Endothelial cell of umbilical vein (primary cell): ENCODE measurements at regions of chr2 and their contacts with region 1.

Region 1: GRCh38 chr2:158998551-158999248 is 30.3 kb downstream of the TANC1 start:
- DNase-seq: peak; percentile 86
- H3K4me3 ChIP-seq: peak overlapping the region in 1 of 3 experiments; percentile 42
- H3K27ac ChIP-seq: peak overlapping the region; percentile 87
- H3K4me1 ChIP-seq: peaks cover 41% of the 10 kb centered on the region
- H3K27me3 ChIP-seq: no peaks in the 10 kb centered on the region
- CTCF ChIP-seq: no peak
- POLR2A ChIP-seq: peak; percentile 32

Region 2: GRCh38 chr2:158745044-158745865 is 253.4 kb before region 1 on chr2:
- CTCF ChIA-PET with region 1: no interaction called
- POLR2A ChIA-PET with region 1: no interaction called
- dilution Hi-C with region 1: no loop called
- intact Hi-C with region 1: no loop called
- DNase-seq: peak; percentile 80
- H3K4me3 ChIP-seq: no peak overlapping the region
- H3K27ac ChIP-seq: no peak overlapping the region
- H3K4me1 ChIP-seq: peaks cover 3% of the 10 kb centered on the region
- H3K27me3 ChIP-seq: peaks cover 23 to 28% of the 10 kb centered on the region in 2 experiments
- CTCF ChIP-seq: peak; percentile 46 to 53
- POLR2A ChIP-seq: no peak

Region 3: DNA sequence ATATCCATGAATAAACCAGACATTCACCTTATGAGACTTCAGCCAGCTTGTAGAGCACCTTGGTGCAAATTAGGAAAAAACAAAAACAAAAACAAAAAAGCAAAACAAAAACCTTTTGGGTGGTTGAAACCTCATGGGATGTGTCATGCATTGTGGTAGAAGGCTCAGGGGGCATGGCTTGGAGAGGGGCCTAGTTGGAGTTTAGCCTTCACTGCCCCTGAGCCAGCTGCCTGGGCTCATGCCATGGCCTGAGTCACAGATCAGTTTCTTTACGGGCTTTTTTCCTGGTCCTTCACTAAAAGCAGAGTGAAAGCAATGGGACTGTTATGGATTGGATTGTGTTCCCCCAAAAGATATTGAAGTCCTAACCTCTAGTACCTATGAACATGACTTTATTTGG is 225.6 kb before region 1 on chr2:
- CTCF ChIA-PET with region 1: no interaction called
- POLR2A ChIA-PET with region 1: no interaction called
- dilution Hi-C with region 1: no loop called
- intact Hi-C with region 1: no loop called
- DNase-seq: no peak
- H3K4me3 ChIP-seq: no peak overlapping the region
- H3K27ac ChIP-seq: no peak overlapping the region
- H3K4me1 ChIP-seq: no peaks in the 10 kb centered on the region
- H3K27me3 ChIP-seq: peaks cover 4 to 8% of the 10 kb centered on the region in 2 experiments
- CTCF ChIP-seq: no peak
- POLR2A ChIP-seq: no peak

Region 4: GRCh38 chr2:158936978-158937377 is 61.7 kb before region 1 on chr2:
- CTCF ChIA-PET with region 1: interaction called, 4 read pairs
- POLR2A ChIA-PET with region 1: no interaction called
- dilution Hi-C with region 1: no loop called
- intact Hi-C with region 1: loop called (anchors 1 kb)
- DNase-seq: peak; percentile 99
- H3K4me3 ChIP-seq: no peak overlapping the region
- H3K27ac ChIP-seq: peak overlapping the region; percentile 87
- H3K4me1 ChIP-seq: peaks cover 18% of the 10 kb centered on the region
- H3K27me3 ChIP-seq: no peaks in the 10 kb centered on the region
- CTCF ChIP-seq: no peak
- POLR2A ChIP-seq: no peak

Region 5: DNA sequence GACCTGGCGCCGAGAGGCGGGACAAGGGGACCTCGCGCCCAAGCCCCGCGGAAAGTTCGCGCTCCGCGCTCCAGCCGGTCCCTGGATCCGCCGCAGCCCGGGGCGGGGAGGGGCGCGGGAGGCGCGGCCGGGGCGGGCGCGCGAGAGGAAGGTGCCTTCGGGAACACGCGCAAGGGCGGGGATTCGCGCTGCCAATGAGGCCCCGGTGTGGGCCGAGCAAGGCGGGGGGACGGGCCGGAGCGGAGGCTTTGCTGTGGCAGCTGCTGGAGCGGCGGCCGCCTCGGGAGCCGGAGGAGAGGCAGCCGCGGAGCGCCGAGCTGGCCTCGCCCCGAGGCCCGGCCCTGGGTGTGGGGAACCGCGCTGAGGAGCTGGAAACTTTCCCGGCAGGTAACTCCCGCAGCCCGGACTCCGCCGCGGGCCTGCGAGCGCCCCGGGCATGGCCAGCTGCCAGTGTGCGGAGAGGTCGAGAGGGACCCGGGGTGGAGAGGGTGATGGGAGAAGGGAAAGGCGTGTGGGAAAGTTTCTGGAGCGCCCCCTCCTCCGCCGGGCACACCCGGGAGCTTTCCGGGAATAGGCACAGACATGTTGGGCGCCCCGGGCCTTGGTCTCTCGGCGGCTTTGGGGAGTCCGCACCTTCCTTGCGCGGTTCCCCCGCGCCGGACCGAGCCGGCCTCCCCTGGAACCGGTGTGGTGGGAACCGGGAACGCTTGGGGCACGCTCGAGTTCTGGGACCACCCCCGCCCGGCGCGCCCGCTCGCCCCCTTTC is 30.1 kb before region 1 on chr2 and contains the start of gene TANC1:
- CTCF ChIA-PET with region 1: interaction called, 8 read pairs
- POLR2A ChIA-PET with region 1: no interaction called
- dilution Hi-C with region 1: no loop called
- intact Hi-C with region 1: loop called (anchors 1 kb)
- DNase-seq: peak; percentile 90
- H3K4me3 ChIP-seq: peak within 1 kb of the TSS; percentile 80 to 89 (median 89)
- H3K27ac ChIP-seq: peak within 1 kb of the TSS; percentile 75
- H3K4me1 ChIP-seq: peaks cover 36% of the 10 kb centered on the region
- H3K27me3 ChIP-seq: no peaks in the 10 kb centered on the region
- CTCF ChIP-seq: no peak
- POLR2A ChIP-seq: peak; percentile 96
- total RNA-seq, gene TANC1: 86.3 and 99.4 TPM in 2 replicates

Region 6: GRCh38 chr2:159010340-159010739 is 11.6 kb after region 1 on chr2:
- CTCF ChIA-PET with region 1: interaction called, 20 read pairs
- POLR2A ChIA-PET with region 1: no interaction called
- dilution Hi-C with region 1: no loop called
- intact Hi-C with region 1: no loop called
- DNase-seq: peak; percentile 52
- H3K4me3 ChIP-seq: no peak overlapping the region
- H3K27ac ChIP-seq: no peak overlapping the region
- H3K4me1 ChIP-seq: peaks cover 9% of the 10 kb centered on the region
- H3K27me3 ChIP-seq: no peaks in the 10 kb centered on the region
- CTCF ChIP-seq: no peak
- POLR2A ChIP-seq: no peak

Region 7: DNA sequence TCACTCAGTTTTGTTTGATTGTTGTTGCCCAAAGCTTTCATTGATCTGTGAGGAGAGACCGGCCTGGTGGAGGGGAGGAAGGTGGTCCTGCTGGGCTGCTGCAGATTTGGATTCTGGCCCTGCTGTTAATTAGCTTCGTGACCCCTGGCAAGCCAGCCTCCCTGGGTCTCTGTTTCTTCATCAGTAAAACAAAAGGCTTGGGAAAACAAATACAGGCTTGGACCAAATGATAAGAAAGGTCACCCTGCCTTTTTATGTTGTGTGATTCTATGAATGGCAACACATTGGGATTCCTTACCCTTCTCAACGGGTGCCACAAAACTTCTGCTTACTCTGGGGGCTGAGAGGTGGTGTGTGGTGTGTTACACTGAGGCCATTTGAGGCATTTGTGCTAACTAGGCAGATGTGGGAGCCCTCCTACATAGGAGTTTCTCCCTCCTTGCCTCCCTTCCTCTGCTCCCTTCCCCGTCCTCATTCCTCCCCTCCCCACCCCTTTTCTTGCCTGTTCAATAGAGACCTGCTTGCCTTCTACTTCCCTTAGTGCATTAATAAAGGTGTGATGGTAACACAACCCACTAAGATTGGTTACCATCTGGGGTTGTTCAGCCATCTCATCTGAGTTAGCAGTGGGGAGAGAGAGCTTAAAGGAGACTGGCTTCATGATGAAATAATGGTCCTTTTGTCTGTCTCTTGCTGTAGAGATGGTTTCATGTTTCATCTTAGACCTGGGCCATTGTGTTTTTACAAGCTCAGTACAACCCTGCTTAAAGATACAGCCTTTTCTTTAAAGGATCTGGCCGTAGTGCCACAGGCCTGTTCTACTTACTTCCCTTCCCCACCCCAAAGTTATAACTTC is 66.0 kb after region 1 on chr2:
- CTCF ChIA-PET with region 1: no interaction called
- POLR2A ChIA-PET with region 1: no interaction called
- dilution Hi-C with region 1: no loop called
- intact Hi-C with region 1: loop called (anchors 2 kb)
- DNase-seq: peak; percentile 94
- H3K4me3 ChIP-seq: no peak overlapping the region
- H3K27ac ChIP-seq: peak overlapping the region; percentile 54
- H3K4me1 ChIP-seq: peaks cover 42% of the 10 kb centered on the region
- H3K27me3 ChIP-seq: no peaks in the 10 kb centered on the region
- CTCF ChIP-seq: no peak
- POLR2A ChIP-seq: peak; percentile 26

Region 8: DNA sequence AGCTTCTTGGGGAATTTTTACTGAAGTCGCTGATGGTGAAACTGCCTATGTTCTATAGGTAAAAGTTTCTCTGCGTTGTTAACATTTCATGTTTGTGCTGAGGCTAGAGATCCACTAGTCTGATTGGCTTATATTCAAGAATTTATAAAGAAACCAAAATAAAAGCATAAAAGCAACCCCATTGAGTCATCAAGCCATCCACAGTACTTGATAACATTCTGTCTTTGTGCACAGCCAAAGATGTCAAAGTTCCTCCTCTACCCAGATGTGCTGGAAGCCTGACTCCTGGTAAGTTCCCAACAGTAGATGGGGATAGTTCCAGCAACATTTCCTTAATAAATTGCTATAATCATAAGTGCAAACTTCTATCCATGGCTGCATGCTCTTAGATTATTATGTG is 77.5 kb after region 1 on chr2:
- CTCF ChIA-PET with region 1: interaction called, 12 read pairs
- POLR2A ChIA-PET with region 1: interaction called, 4 read pairs
- dilution Hi-C with region 1: no loop called
- intact Hi-C with region 1: no loop called
- DNase-seq: peak; percentile 87
- H3K4me3 ChIP-seq: no peak overlapping the region
- H3K27ac ChIP-seq: peak overlapping the region; percentile 46
- H3K4me1 ChIP-seq: peaks cover 66% of the 10 kb centered on the region
- H3K27me3 ChIP-seq: no peaks in the 10 kb centered on the region
- CTCF ChIP-seq: no peak
- POLR2A ChIP-seq: no peak